Activated CD4-positive, alpha-beta memory T cell treated with anti-CD3 and anti-CD28 coated beads for 36 hours (primary cell): ENCODE measurements at regions of chr9 and their contacts with region 1.

Region 1: GRCh38 chr9:112333639-112334431 is 416 bp upstream of the PTBP3 start:
- DNase-seq: peak; percentile 96
- H3K4me3 Mint-ChIP-seq: peak overlapping the region; percentile 92
- H3K27ac Mint-ChIP-seq: peak overlapping the region; percentile 97
- H3K4me1 Mint-ChIP-seq: peaks cover 31% of the 10 kb centered on the region
- H3K27me3 Mint-ChIP-seq: no peaks in the 10 kb centered on the region

Region 2: GRCh38 chr9:111896353-111896958 is 437.4 kb before region 1 on chr9 and contains the start of gene UGCG:
- CTCF ChIA-PET with region 1: no interaction called
- POLR2A ChIA-PET with region 1: interaction called, 6 read pairs
- intact Hi-C with region 1: loop called (anchors 1 kb)
- DNase-seq: peak; percentile 91
- H3K4me3 Mint-ChIP-seq: peak within 1 kb of the TSS; percentile 88
- H3K27ac Mint-ChIP-seq: peak within 1 kb of the TSS; percentile 83
- H3K4me1 Mint-ChIP-seq: peaks cover 23% of the 10 kb centered on the region
- H3K27me3 Mint-ChIP-seq: no peaks in the 10 kb centered on the region
- total RNA-seq, gene UGCG: 12.4 to 13.5 TPM

Region 3: DNA sequence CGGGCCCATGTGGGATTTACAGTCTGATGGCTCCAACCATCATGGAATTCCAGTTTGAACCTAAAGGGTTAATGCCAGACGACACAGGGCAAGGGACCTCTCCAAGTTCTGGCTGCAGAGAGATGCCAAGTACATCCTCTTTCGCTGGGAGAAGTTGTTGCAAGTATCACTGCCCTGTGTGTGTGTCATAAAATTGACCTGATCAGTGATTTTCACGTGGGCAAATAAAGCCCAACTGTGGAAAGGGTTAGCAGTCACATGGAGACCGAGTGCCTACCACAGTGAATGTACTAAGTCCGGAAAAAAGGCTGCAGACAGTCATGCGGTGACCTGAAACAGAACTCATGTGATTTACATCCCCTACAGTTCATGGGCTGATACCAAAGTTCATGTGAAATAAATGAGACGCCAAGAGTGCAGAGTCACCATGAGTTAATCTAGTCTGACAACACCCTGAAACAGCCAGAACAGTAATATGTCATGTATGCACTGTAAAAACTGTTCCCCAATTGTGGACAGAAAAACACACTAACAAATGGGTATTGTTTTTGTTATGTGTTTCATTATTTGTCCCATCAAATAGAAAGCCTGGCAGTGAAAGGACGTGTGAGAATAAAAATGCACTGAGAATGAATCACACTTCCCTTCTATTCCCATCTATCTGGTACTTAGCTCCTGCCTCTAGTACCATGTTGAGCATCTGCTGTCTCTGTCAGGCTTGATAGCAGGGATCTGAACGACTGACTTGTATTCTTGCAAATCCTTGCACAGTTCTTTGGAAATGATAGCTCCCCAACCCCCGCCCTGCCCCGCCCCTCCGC is 274.5 kb before region 1 on chr9:
- CTCF ChIA-PET with region 1: no interaction called
- POLR2A ChIA-PET with region 1: no interaction called
- intact Hi-C with region 1: no loop called
- DNase-seq: no peak
- H3K4me3 Mint-ChIP-seq: no peak overlapping the region
- H3K27ac Mint-ChIP-seq: no peak overlapping the region
- H3K4me1 Mint-ChIP-seq: peaks cover 22% of the 10 kb centered on the region
- H3K27me3 Mint-ChIP-seq: no peaks in the 10 kb centered on the region

Region 4: DNA sequence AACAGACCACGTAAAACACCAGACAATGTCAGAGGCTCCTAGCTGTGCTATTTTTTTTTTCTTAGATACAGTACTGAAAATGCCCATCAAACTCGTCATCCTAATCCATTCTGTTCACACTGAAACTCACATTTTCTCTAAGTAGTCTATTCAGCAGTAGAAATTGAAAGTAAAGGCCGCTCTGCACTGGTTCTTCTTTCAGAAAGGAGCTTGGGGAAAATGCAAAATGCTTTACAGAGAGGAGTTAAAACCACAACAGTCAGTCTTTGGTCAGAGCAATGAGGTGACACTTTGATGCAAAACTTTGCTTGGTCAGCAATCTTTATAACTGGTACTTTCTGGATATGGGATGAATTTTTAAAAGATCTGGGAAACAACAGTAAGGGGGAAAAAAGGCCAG is 114.9 kb before region 1 on chr9:
- CTCF ChIA-PET with region 1: interaction called, 3 read pairs
- POLR2A ChIA-PET with region 1: interaction called, 3 read pairs
- intact Hi-C with region 1: loop called (anchors 2 kb)
- DNase-seq: peak; percentile 19
- H3K4me3 Mint-ChIP-seq: no peak overlapping the region
- H3K27ac Mint-ChIP-seq: peak overlapping the region; percentile 11
- H3K4me1 Mint-ChIP-seq: peaks cover 35% of the 10 kb centered on the region
- H3K27me3 Mint-ChIP-seq: no peaks in the 10 kb centered on the region

Region 5: GRCh38 chr9:112315331-112316257 is 18.2 kb before region 1 on chr9:
- CTCF ChIA-PET with region 1: interaction called, 5 read pairs
- POLR2A ChIA-PET with region 1: interaction called, 8 read pairs
- intact Hi-C with region 1: loop called (anchors 1 kb)
- DNase-seq: no peak
- H3K4me3 Mint-ChIP-seq: no peak overlapping the region
- H3K27ac Mint-ChIP-seq: peak overlapping the region; percentile 58
- H3K4me1 Mint-ChIP-seq: peaks cover 63% of the 10 kb centered on the region
- H3K27me3 Mint-ChIP-seq: no peaks in the 10 kb centered on the region

Region 6: DNA sequence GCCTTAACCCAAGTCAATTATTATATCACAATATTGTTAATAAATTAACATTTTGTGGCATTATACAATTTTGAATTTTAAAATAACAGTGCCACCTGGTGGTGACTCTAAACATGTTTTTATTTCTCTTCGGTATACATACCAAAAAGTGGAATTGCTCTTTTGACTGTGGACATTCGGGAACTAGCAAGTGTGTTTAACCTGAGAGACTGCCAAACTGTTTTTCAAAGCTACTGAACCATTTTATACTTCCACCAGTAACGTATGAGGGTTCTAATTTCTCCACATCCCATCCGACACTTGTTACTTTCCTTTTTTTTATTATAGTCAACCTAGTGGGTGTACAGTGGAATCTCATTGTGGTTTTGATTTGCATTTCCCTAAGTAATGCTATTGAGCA is 27.8 kb after region 1 on chr9:
- CTCF ChIA-PET with region 1: interaction called, 12 read pairs
- POLR2A ChIA-PET with region 1: no interaction called
- intact Hi-C with region 1: loop called (anchors 1 kb)
- DNase-seq: no peak
- H3K4me3 Mint-ChIP-seq: no peak overlapping the region
- H3K27ac Mint-ChIP-seq: no peak overlapping the region
- H3K4me1 Mint-ChIP-seq: peaks cover 10% of the 10 kb centered on the region
- H3K27me3 Mint-ChIP-seq: peaks cover 7% of the 10 kb centered on the region

Region 7: GRCh38 chr9:112717661-112718341 is 384.0 kb after region 1 on chr9 and contains the start of gene INIP:
- CTCF ChIA-PET with region 1: no interaction called
- POLR2A ChIA-PET with region 1: no interaction called
- intact Hi-C with region 1: loop called (anchors 1 kb)
- DNase-seq: peak; percentile 99
- H3K4me3 Mint-ChIP-seq: peak within 1 kb of the TSS; percentile 90
- H3K27ac Mint-ChIP-seq: peak within 1 kb of the TSS; percentile 93
- H3K4me1 Mint-ChIP-seq: peaks cover 35% of the 10 kb centered on the region
- H3K27me3 Mint-ChIP-seq: no peaks in the 10 kb centered on the region
- total RNA-seq, gene INIP: 35.1 to 37.8 TPM